Heart right ventricle (tissue), 16 donors: ENCODE measurements at regions of chr12 and their contacts with region 1.

Region 1: GRCh38 chr12:107436376-107436775 is 249.2 kb upstream of the PWP1 start:
- DNase-seq: no peak
- ATAC-seq: no peak
- H3K4me3 ChIP-seq: no peak overlapping the region
- H3K27ac ChIP-seq: no peak overlapping the region
- H3K4me1 ChIP-seq: no peaks in the 10 kb centered on the region
- H3K27me3 ChIP-seq: peaks cover 0 to 9% (median 0%) of the 10 kb centered on the region in 7 donors
- CTCF ChIP-seq: no peak

Region 2: DNA sequence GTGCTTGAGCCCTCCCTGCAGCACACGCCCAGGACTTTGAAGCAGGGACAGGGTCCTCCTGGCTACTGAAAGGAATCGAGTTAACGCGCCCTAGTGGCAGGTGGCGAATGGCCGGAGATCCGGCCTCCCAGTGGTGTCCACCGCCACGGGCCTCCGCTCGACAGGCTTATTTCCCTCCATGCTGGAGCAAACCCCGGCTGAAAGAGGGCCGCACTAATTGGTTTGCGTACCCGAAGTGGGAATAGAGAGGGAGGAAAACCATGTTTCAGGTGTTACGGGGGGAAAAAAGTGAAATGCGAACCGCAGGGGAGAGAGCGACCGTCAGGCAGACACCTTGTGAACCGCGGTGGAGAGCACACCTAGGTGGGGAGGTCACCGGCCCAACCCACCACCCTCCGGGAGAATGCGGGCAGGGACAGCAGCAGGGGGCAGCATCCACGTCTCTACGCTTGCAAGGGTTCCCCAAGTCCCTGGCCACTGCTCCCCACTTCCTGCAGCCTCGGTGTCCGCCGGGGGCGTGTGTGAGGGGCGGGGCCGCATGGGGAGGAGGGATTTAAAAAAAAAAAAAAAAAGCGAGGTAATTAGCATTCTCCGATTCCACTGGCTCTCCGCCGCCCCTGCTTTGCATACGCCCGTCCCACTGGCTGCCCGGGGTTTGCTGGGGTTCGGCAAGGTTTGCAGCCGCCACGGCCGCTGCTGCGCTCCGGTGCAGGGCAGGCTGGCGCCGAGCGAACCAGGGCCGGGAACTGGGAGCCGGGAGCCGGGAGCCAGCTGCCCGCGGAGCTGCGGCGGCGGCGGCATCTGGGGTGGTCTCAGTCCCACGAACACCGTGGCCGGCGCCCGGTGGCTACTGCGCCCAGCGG is 118.4 kb before region 1 on chr12:
- intact Hi-C with region 1: no loop called
- DNase-seq: peak; percentile 69 to 77
- ATAC-seq: peak; percentile 89 to 94 (median 92)
- H3K4me3 ChIP-seq: peak overlapping the region; percentile 21 to 63 (median 53)
- H3K27ac ChIP-seq: peak overlapping the region in 2 of 10 donors; percentile 21 to 47
- H3K4me1 ChIP-seq: peaks cover 0 to 40% (median 25%) of the 10 kb centered on the region in 9 donors
- H3K27me3 ChIP-seq: peaks cover 6 to 84% (median 66%) of the 10 kb centered on the region in 7 donors
- CTCF ChIP-seq: peak in 3 of 9 donors; percentile 18 to 26 (median 25)

Region 3: GRCh38 chr12:107379852-107380567 is 56.4 kb before region 1 on chr12:
- intact Hi-C with region 1: no loop called
- DNase-seq: no peak
- ATAC-seq: no peak
- H3K4me3 ChIP-seq: no peak overlapping the region
- H3K27ac ChIP-seq: no peak overlapping the region
- H3K4me1 ChIP-seq: peaks cover 0 to under 1% (median 0%) of the 10 kb centered on the region in 9 donors
- H3K27me3 ChIP-seq: peaks cover 0 to 3% (median 0%) of the 10 kb centered on the region in 7 donors
- CTCF ChIP-seq: no peak

Region 4: GRCh38 chr12:107402041-107403022 is 34.0 kb before region 1 on chr12:
- intact Hi-C with region 1: loop called in 1 of 10 experiments (anchors 1 kb)
- DNase-seq: peak in 1 of 2 donors; percentile 17
- ATAC-seq: no peak
- H3K4me3 ChIP-seq: no peak overlapping the region
- H3K27ac ChIP-seq: no peak overlapping the region
- H3K4me1 ChIP-seq: peaks cover 0 to 11% (median 0%) of the 10 kb centered on the region in 9 donors
- H3K27me3 ChIP-seq: peaks cover 0 to 4% (median 0%) of the 10 kb centered on the region in 7 donors
- CTCF ChIP-seq: peak in 7 of 9 donors; percentile 31 to 65 (median 46)